ENCODE measurements at regions of chrX and their contacts with region 1.

Region 1: DNA sequence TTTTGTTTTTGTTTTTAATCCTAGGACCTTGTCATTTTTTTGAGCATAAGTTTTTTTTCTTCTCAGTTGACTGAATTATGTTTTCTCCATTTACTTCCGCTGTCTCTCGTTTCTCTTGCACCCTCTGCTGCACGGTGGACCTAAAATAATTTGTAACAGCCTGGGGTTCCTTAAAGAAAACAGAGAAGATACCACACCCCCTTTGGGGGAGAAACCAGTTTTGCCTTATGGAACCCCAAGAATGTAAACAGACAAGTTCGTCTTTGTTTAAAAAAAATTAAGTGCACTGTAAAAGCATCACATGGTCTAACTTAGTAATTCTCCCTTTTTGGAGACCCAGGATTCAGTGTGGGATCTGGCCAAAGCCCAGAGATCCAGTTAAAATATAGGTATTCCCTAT is 32.8 kb upstream of the MAGEA4 start:
- DNase-seq: no peak
- H3K4me3 ChIP-seq: no peak overlapping the region
- CTCF ChIP-seq: no peak
- POLR2A ChIP-seq: no peak

Region 2: DNA sequence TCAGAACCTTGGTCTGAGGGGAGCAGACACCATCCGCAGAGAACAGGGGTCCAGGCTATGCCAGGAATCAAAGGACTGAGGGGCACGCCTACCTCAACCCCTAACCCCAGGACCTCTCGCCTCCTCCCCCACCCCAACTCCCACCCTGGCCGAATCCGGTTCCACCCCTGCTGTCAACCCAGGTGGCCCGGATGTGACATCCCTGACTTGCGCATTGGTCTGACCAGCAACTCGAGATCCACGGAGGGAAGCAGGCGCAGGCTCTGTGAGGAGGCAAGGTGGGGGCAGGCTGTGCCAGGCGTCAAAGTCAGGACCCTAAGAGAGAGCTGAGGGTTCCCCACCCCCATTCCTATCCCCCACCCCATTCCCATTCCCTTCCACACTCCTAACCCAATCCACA is 32.4 kb after region 1 on chrX:
- intact Hi-C with region 1: no loop called
- DNase-seq: peak in 1 of 2 donors; percentile 80
- H3K4me3 ChIP-seq: no peak overlapping the region
- CTCF ChIP-seq: no peak
- POLR2A ChIP-seq: no peak

Region 3: GRCh38 chrX:153769865-153770600 is 1890.2 kb after region 1 on chrX:
- intact Hi-C with region 1: loop called (anchors 5 kb)
- DNase-seq: no peak
- H3K4me3 ChIP-seq: no peak overlapping the region
- CTCF ChIP-seq: no peak
- POLR2A ChIP-seq: no peak

Measured in lower leg skin (tissue), 4 donors.